ENCODE measurements at regions of chr14 and their contacts with region 1.

Region 1: DNA sequence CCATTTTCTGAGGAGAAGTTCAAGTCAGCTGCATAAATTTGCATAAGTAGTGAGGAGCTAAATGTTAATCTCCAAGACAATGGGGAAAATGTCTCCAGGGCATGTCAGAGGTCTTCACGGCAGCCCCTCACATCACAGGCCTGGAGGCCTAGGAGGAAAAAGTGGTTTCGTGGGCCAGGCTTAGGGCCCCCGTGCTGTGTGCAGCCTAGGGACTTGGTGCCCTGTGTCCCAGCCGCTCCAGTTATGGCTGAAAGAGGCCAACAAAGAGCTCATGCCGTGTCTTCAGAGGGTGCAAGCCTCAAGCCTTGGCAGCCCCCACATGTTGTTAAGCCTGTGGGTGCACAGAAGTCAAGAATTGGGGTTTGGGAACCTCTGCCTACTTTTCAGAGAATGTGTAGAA is 41.9 kb upstream of the RD3L start:
- DNase-seq: no peak
- ATAC-seq: no peak
- H3K4me3 ChIP-seq: no peak overlapping the region
- H3K27ac ChIP-seq: no peak overlapping the region
- H3K4me1 ChIP-seq: no peaks in the 10 kb centered on the region
- H3K27me3 ChIP-seq: peaks cover 0 to 18% of the 10 kb centered on the region in 2 experiments; a peak in 2 of 5 replicates
- CTCF ChIP-seq: no peak
- EP300 ChIP-seq: no peak
- POLR2A ChIP-seq: no peak
- RAD21 ChIP-seq: no peak

Region 2: GRCh38 chr14:103871596-103872480 is 112.4 kb before region 1 on chr14:
- CTCF ChIA-PET with region 1: no interaction called
- POLR2A ChIA-PET with region 1: no interaction called
- in situ Hi-C with region 1: no loop called
- intact Hi-C with region 1: no loop called
- DNase-seq: no peak
- ATAC-seq: no peak
- H3K4me3 ChIP-seq: no peak overlapping the region
- H3K27ac ChIP-seq: peak overlapping the region; percentile 50
- H3K4me1 ChIP-seq: peaks cover 58% of the 10 kb centered on the region
- H3K27me3 ChIP-seq: no peaks in the 10 kb centered on the region
- CTCF ChIP-seq: no peak
- EP300 ChIP-seq: no peak
- POLR2A ChIP-seq: 0 out of 4 replicates have a peak, but pooled peaks of 1 of the 2 experiments have one; percentile 7
- RAD21 ChIP-seq: no peak

Region 3: GRCh38 chr14:103904493-103905107 is 79.6 kb before region 1 on chr14:
- CTCF ChIA-PET with region 1: interaction called, 3 read pairs
- POLR2A ChIA-PET with region 1: no interaction called
- in situ Hi-C with region 1: loop called (anchors 5 kb)
- intact Hi-C with region 1: no loop called
- DNase-seq: no peak
- ATAC-seq: no peak
- H3K4me3 ChIP-seq: no peak overlapping the region
- H3K27ac ChIP-seq: no peak overlapping the region
- H3K4me1 ChIP-seq: peaks cover 6% of the 10 kb centered on the region; the same call in 1 of the 2 replicates
- H3K27me3 ChIP-seq: no peaks in the 10 kb centered on the region; a peak in 1 of 5 replicates
- CTCF ChIP-seq: no peak
- EP300 ChIP-seq: no peak
- POLR2A ChIP-seq: no peak
- RAD21 ChIP-seq: no peak

Region 4: GRCh38 chr14:103920981-103921854 is 63.0 kb before region 1 on chr14:
- CTCF ChIA-PET with region 1: no interaction called
- POLR2A ChIA-PET with region 1: no interaction called
- in situ Hi-C with region 1: loop called (anchors 10 kb)
- intact Hi-C with region 1: loop called (anchors 1 kb)
- DNase-seq: peak; percentile 83
- ATAC-seq: peak; percentile 97
- H3K4me3 ChIP-seq: peak overlapping the region; percentile 89 to 93 (median 92)
- H3K27ac ChIP-seq: peak overlapping the region; percentile 84
- H3K4me1 ChIP-seq: peaks cover 42% of the 10 kb centered on the region
- H3K27me3 ChIP-seq: no peaks in the 10 kb centered on the region; a peak in 1 of 5 replicates
- CTCF ChIP-seq: peak; percentile 99
- EP300 ChIP-seq: peak in 1 of 2 experiments; percentile 35; a peak in 1 of 4 replicates
- POLR2A ChIP-seq: peak; percentile 73 to 95
- RAD21 ChIP-seq: peak; percentile 78

Measured in HepG2 (cell line).